Naive thymus-derived CD4-positive, alpha-beta T cell (primary cell): ENCODE measurements at regions of chr12 and their contacts with region 1.

Region 1: DNA sequence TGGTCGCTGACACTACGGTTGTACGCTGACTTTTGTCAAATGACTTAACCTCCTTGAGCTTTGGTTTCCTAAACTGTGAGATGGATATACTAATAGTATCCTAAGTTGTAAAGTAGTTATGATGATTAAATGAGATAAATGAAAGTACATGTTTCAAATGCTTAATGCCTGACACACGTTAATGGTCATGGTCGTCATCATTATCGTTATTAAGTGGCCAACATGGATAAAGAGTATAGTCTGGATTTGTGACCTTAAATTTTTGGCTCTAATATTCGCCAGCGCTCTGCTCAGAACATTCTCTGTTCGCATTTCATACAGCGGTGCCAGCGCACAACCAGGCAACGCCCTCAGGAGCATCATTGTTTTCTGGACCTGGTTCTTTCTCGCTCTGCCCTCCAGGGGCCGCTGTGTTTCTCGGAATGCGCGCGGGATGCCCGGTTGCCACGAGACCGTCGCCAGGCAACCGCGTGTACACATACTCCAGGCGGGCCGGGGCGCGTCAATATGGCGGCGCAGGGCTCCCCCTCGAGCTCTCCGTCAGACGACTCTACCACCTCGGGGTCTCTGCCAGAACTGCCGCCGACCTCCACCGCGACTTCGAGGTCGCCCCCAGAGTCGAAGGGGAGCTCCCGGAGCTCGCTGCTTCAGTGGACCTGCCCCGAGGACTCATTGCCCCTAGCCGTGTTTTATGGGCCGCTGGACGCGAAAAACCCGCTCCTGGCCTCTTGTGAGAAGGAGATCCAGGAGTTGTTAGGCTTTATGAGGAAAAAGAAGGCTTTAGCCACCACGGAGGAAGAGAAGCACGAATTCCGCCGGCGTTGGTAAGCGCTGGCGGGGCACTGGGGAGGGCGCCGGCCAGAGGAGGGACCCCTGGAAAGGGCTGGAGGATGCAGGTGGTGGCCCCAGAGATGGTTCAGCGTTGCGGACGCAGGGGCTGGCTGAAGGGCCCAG is at the start of gene CFAP54:
- DNase-seq: peak; percentile 91 to 97 (median 94)
- ATAC-seq: peak; percentile 96
- H3K4me3 ChIP-seq: peak within 1 kb of the TSS; percentile 71
- H3K4me3 Mint-ChIP-seq: peak within 1 kb of the TSS; percentile 77 to 93 (median 88)
- H3K27ac ChIP-seq: peak within 1 kb of the TSS; percentile 66
- H3K27ac Mint-ChIP-seq: peak within 1 kb of the TSS; percentile 68 to 96 (median 89)
- H3K4me1 ChIP-seq: peaks cover 7 to 12% of the 10 kb centered on the region in 2 donors
- H3K4me1 Mint-ChIP-seq: peaks cover 14 to 37% (median 22%) of the 10 kb centered on the region in 7 donors
- H3K27me3 ChIP-seq: no peaks in the 10 kb centered on the region
- H3K27me3 Mint-ChIP-seq: peaks cover 0 to 33% (median 0%) of the 10 kb centered on the region in 5 donors
- total RNA-seq, gene CFAP54: 0.22 to 0.93 (median 0.30) TPM

Region 2: DNA sequence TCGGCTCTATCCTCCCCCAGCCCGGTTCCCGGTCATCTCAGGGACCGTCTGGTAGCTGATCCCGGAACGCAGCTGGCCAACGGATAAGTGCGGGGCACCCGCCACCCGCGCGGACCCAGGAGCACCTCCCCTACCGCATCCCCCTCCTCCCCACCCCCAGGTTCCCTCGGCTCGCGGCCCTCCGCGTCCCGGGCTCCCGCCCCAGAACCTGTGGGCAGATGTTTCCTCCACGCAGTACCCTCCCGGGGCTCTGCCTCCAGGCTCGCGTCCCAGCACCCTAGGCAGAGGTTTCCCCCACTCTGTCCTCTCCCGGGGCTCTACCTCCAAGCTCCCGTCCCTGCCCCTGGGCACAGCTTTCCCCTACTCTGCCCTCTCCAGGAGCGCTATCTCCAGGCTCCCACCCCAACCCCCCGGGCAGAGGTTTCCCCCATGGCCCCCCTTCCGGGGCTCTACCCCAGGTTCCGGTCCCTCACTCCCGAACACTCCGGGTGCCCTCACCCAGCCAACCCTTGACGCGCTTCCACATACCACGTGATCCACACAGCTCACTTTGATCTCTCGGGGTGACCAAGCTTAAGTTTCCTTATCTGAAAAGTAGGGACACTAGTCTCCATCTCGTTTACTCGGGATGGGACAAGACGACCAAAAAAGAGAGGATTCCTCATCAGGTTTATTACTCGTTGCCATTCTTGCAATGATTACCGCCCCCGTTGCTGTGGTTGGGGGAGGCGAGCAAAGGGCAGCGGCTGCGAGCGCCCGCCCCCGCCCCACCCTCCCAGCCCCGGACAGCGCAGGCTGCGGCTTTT is 546.7 kb before region 1 on chr12 and contains the start of gene CCDC38:
- CTCF ChIA-PET with region 1: no interaction called
- POLR2A ChIA-PET with region 1: no interaction called
- intact Hi-C with region 1: loop called in 1 of 2 experiments (anchors 2 kb)
- DNase-seq: peak; percentile 56 to 86 (median 82)
- ATAC-seq: peak; percentile 97
- H3K4me3 ChIP-seq: peak within 1 kb of the TSS; percentile 93
- H3K4me3 Mint-ChIP-seq: peak within 1 kb of the TSS; percentile 88 to 99 (median 96)
- H3K27ac ChIP-seq: peak within 1 kb of the TSS; percentile 86
- H3K27ac Mint-ChIP-seq: peak within 1 kb of the TSS; percentile 85 to 97 (median 89)
- H3K4me1 ChIP-seq: peaks cover 6% of the 10 kb centered on the region in 2 donors
- H3K4me1 Mint-ChIP-seq: peaks cover 4 to 12% (median 10%) of the 10 kb centered on the region in 7 donors
- H3K27me3 ChIP-seq: no peaks in the 10 kb centered on the region
- H3K27me3 Mint-ChIP-seq: peaks cover 0 to 26% (median 0%) of the 10 kb centered on the region in 5 donors
- total RNA-seq, gene CCDC38: 0.07 to 0.27 TPM in 2 of 5 experiments, not detected in the others

Region 3: GRCh38 chr12:95976416-95976832 is 513.0 kb before region 1 on chr12:
- CTCF ChIA-PET with region 1: no interaction called
- POLR2A ChIA-PET with region 1: no interaction called
- intact Hi-C with region 1: no loop called
- DNase-seq: no peak
- ATAC-seq: no peak
- H3K4me3 ChIP-seq: no peak overlapping the region
- H3K4me3 Mint-ChIP-seq: no peak overlapping the region
- H3K27ac ChIP-seq: no peak overlapping the region
- H3K27ac Mint-ChIP-seq: no peak overlapping the region
- H3K4me1 ChIP-seq: no peaks in the 10 kb centered on the region
- H3K4me1 Mint-ChIP-seq: no peaks in the 10 kb centered on the region
- H3K27me3 ChIP-seq: no peaks in the 10 kb centered on the region
- H3K27me3 Mint-ChIP-seq: no peaks in the 10 kb centered on the region

Region 4: DNA sequence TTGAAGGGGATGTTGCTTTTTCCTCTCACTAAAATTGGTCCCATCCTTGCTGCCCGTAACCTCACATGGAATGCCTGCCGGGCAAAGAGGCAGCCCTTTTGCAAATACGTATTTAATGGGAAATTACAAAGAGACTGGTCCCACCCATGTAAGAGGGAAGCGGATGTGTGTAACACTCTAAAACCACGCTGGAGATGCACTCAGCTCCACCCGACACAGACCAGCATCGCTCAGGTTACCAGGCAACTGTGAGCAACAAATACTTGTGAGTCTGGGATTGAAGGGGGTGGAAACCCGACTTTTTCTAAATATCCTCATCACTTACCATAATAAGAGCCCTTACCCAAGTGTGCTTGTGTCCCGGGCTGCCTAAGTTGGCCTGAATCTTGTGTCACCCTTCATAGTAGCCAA is 247.5 kb before region 1 on chr12:
- CTCF ChIA-PET with region 1: no interaction called
- POLR2A ChIA-PET with region 1: no interaction called
- intact Hi-C with region 1: loop called in 1 of 2 experiments (anchors 5 kb)
- DNase-seq: peak in 8 of 9 donors; percentile 37 to 86 (median 81)
- ATAC-seq: peak; percentile 97
- H3K4me3 ChIP-seq: peak overlapping the region; percentile 28
- H3K4me3 Mint-ChIP-seq: peak overlapping the region; percentile 16 to 71 (median 58)
- H3K27ac ChIP-seq: peak overlapping the region; percentile 73
- H3K27ac Mint-ChIP-seq: peak overlapping the region; percentile 58 to 98 (median 91)
- H3K4me1 ChIP-seq: peaks cover 33 to 51% of the 10 kb centered on the region in 2 donors
- H3K4me1 Mint-ChIP-seq: peaks cover 33 to 70% (median 64%) of the 10 kb centered on the region in 7 donors
- H3K27me3 ChIP-seq: no peaks in the 10 kb centered on the region
- H3K27me3 Mint-ChIP-seq: no peaks in the 10 kb centered on the region

Region 5: DNA sequence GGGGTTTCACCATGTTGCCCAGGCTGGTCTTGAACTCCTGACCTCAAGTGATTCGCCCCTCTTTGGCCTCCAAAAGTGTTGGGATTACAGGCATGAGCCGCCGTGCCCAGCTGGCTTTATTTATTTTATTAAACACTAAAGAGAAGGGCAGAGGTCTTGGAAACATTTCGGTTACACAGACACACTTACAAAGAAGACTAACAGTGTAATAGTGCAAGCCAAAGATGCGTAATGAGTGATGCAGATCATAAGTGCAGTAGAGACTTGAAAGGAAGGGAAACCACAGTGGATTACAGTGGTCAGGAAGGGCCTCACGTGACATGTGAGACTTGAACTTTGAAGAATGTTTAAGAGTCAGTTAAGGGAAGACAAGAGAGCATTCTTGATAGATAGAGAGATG is 55.3 kb before region 1 on chr12:
- CTCF ChIA-PET with region 1: interaction called, 6 read pairs
- POLR2A ChIA-PET with region 1: interaction called, 4 read pairs
- intact Hi-C with region 1: loop called (anchors 1 kb)
- DNase-seq: peak; percentile 10 to 92 (median 88)
- ATAC-seq: peak; percentile 100
- H3K4me3 ChIP-seq: no peak overlapping the region
- H3K4me3 Mint-ChIP-seq: peak overlapping the region; percentile 10 to 81 (median 64)
- H3K27ac ChIP-seq: peak overlapping the region; percentile 81
- H3K27ac Mint-ChIP-seq: peak overlapping the region; percentile 60 to 94 (median 84)
- H3K4me1 ChIP-seq: peaks cover 15 to 20% of the 10 kb centered on the region in 2 donors
- H3K4me1 Mint-ChIP-seq: peaks cover 24 to 52% (median 43%) of the 10 kb centered on the region in 7 donors
- H3K27me3 ChIP-seq: no peaks in the 10 kb centered on the region
- H3K27me3 Mint-ChIP-seq: no peaks in the 10 kb centered on the region

Region 6: DNA sequence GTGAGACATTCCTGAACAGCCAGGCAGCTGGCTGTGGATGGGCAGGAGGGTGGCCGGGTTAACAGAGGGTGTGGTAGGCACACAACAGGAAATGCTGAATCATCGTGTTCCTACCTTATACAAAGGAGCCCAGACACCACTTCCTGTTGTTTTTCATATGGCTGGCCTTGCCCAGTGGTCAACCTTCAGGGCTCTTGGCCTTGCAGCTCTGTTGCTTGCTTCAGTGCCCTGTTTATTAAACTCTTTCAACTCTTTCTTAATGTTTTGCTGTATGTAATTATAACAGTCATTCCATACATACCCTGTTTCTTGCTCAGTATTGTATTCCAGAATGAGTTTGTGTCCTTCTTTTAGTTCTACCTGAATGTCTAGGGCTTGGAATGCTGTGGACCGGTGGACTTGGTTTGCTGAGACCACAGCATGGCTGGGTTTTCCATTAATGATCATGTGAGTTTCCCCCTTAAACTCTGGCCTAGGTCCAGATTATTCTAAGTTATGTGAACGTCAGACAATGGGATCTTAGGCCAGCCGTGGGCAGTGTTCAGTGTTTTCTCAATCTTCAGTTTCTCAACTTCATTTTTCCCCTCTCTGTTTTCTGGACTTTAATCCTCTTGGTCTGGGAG is 11.9 kb after region 1 on chr12:
- CTCF ChIA-PET with region 1: interaction called, 4 read pairs
- POLR2A ChIA-PET with region 1: interaction called, 6 read pairs
- intact Hi-C with region 1: loop called in 1 of 2 experiments (anchors 1 kb)
- DNase-seq: peak in 1 of 9 donors; percentile 29
- ATAC-seq: peak; percentile 80
- H3K4me3 ChIP-seq: no peak overlapping the region
- H3K4me3 Mint-ChIP-seq: peak overlapping the region in 9 of 10 donors; percentile 18 to 66 (median 48)
- H3K27ac ChIP-seq: no peak overlapping the region
- H3K27ac Mint-ChIP-seq: peak overlapping the region; percentile 28 to 89 (median 63)
- H3K4me1 ChIP-seq: peaks cover 22 to 35% of the 10 kb centered on the region in 2 donors
- H3K4me1 Mint-ChIP-seq: peaks cover 29 to 60% (median 42%) of the 10 kb centered on the region in 7 donors
- H3K27me3 ChIP-seq: no peaks in the 10 kb centered on the region
- H3K27me3 Mint-ChIP-seq: no peaks in the 10 kb centered on the region